ENCODE measurements at regions of chr12 and their contacts with region 1.

Region 1: GRCh38 chr12:53267999-53268647 is at the start of gene ESPL1:
- DNase-seq: peak; percentile 93
- ATAC-seq: peak; percentile 95
- H3K4me3 Mint-ChIP-seq: peak within 1 kb of the TSS; percentile 98
- H3K27ac Mint-ChIP-seq: peak within 1 kb of the TSS; percentile 98
- H3K4me1 Mint-ChIP-seq: peaks cover 47% of the 10 kb centered on the region
- H3K27me3 Mint-ChIP-seq: no peaks in the 10 kb centered on the region
- total RNA-seq, gene ESPL1: 126 TPM

Region 2: DNA sequence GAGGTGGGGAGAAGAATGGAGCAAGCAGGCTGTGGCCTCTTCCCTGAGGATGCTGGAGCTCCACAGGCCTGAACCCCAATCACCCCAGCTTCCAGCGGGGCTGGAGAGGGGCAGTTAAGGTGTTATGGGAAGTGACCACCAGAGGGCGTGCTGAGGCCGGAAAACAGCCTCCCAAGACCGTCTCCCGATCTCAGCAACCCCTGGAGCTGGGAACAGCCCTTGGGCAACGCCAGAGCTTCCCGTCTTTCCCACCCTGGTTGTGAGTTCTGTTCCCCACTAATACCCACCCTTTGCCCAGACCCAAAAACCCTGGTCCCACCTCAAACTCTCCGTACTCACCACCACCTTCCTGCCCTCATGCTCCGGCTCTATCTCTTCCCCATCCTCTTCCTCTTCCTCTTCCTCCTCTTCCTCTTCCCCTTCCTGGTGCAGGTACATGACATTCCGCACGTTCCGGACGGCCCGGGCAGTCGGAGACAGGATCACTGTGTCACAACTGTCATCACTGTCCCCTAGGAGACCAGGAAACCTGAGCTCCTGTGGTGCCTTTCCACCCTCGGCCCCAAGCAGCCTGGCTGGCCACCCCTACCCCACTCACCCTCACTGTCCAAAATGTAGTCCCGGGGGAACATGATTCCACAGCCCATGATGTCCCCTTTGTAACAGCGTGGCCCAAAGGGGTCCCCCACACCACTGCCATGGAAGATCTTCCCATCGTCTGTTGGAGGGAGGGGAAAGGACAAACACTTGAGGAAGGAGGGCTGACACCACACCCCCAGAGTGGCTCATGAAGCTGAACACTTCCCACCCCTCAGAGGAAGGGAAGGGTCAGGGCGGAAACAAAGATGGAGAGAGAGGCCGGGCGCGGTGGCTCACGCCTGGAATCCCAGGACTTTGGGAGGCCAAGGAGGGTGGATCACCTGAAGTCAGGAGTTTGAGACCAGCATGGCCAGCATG is 201.9 kb before region 1 on chr12:
- CTCF ChIA-PET with region 1: interaction called, 10 read pairs
- POLR2A ChIA-PET with region 1: no interaction called
- DNase-seq: peak; percentile 79
- ATAC-seq: peak; percentile 79
- H3K4me3 Mint-ChIP-seq: no peak overlapping the region
- H3K27ac Mint-ChIP-seq: peak overlapping the region; percentile 69
- H3K4me1 Mint-ChIP-seq: peaks cover 7% of the 10 kb centered on the region
- H3K27me3 Mint-ChIP-seq: no peaks in the 10 kb centered on the region

Region 3: DNA sequence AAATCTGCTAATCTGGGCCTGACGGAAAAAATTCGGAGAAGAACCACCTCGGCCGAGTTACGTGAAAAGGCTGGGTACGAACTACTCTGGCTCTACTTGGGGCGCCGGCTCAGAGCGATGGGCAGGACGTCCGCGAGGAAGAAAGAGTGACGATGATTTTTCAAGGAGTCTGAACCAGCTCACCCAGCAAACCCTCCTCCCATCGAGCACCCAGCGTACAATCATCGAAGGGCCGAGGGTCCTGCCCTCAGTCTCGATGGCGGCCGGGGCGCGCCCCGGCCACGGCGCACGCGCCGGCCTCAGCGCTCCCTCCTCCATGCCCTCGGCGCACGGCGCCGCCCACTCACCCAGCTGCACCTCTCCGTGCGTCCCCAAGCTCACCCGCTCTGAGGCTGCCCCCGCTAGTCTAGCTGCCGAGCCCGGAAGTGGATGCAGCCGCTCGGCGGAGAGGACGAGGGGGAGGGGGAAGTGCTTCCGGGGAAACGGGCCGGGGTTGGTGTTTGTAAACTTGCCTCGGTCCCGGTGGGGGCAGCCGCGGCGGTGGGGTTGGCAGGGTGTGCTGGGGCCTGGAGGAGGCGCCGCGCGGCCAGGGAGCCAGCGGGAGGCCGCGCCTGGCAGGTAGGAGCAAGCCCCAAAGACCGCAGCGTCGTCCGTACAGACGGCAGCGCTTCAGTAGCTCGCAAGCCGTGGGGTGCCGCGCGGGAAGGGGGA is 87.7 kb before region 1 on chr12 and contains the starts of genes CSAD and ZNF740:
- CTCF ChIA-PET with region 1: interaction called, 26 read pairs
- POLR2A ChIA-PET with region 1: interaction called, 18 read pairs
- DNase-seq: peak; percentile 98
- ATAC-seq: peak; percentile 97
- H3K4me3 Mint-ChIP-seq: peak within 1 kb of the TSS; percentile 86
- H3K27ac Mint-ChIP-seq: peak within 1 kb of the TSS; percentile 98
- H3K4me1 Mint-ChIP-seq: peaks cover 50% of the 10 kb centered on the region
- H3K27me3 Mint-ChIP-seq: no peaks in the 10 kb centered on the region
- total RNA-seq, gene CSAD: 15.7 to 17.0 TPM
- total RNA-seq, gene ZNF740: 28.2 to 31.4 TPM

Region 4: GRCh38 chr12:53205747-53206419 is 62.2 kb before region 1 on chr12:
- CTCF ChIA-PET with region 1: interaction called, 401 read pairs
- POLR2A ChIA-PET with region 1: interaction called, 22 read pairs
- DNase-seq: peak; percentile 90
- ATAC-seq: peak; percentile 71
- H3K4me3 Mint-ChIP-seq: peak overlapping the region; percentile 83
- H3K27ac Mint-ChIP-seq: peak overlapping the region; percentile 86
- H3K4me1 Mint-ChIP-seq: peaks cover 80% of the 10 kb centered on the region
- H3K27me3 Mint-ChIP-seq: no peaks in the 10 kb centered on the region

Region 5: GRCh38 chr12:53231826-53232645 is 36.1 kb before region 1 on chr12 and contains the start of gene RARG:
- CTCF ChIA-PET with region 1: interaction called, 11 read pairs
- POLR2A ChIA-PET with region 1: interaction called, 8 read pairs
- DNase-seq: peak; percentile 74
- ATAC-seq: peak; percentile 76
- H3K4me3 Mint-ChIP-seq: peak within 1 kb of the TSS; percentile 83
- H3K27ac Mint-ChIP-seq: peak within 1 kb of the TSS; percentile 76
- H3K4me1 Mint-ChIP-seq: peaks cover 66% of the 10 kb centered on the region
- H3K27me3 Mint-ChIP-seq: no peaks in the 10 kb centered on the region
- total RNA-seq, gene RARG: 44.1 to 45.9 TPM

Region 6: DNA sequence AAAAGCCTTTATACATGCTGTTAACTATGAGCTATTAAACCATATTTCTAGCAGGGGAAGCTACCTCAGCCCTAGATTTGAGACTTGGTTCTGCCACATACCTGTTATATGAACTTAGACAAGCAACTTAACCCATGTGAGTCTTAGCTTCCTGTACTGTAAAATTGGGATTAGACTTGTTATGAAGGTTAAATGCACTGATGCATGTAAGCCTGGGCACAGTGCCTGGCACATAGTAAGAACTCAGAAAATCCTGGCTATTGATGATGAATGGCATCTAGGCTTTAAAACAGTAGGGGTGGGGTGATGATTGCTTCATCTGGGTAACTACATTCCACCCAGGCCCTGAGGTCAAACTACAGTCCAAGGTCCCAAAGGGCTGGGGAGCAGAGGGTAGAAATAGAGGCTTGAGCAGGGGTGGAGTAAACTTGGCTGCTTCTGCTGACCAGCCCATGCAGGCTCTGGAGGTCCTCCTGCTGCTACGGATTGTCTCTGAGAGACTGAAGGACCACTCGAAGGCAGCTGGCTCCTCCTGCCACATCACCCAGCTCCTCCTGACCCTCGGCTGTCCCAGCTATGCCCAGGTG is 11.3 kb after region 1 on chr12:
- CTCF ChIA-PET with region 1: interaction called, 33 read pairs
- POLR2A ChIA-PET with region 1: interaction called, 24 read pairs
- DNase-seq: no peak
- ATAC-seq: no peak
- H3K4me3 Mint-ChIP-seq: no peak overlapping the region
- H3K27ac Mint-ChIP-seq: no peak overlapping the region
- H3K4me1 Mint-ChIP-seq: peaks cover 7% of the 10 kb centered on the region
- H3K27me3 Mint-ChIP-seq: no peaks in the 10 kb centered on the region

Region 7: GRCh38 chr12:53295070-53295890 is 27.2 kb after region 1 on chr12 and contains the start of gene PFDN5:
- CTCF ChIA-PET with region 1: interaction called, 12 read pairs
- POLR2A ChIA-PET with region 1: interaction called, 14 read pairs
- DNase-seq: peak; percentile 93
- ATAC-seq: peak; percentile 88
- H3K4me3 Mint-ChIP-seq: peak within 1 kb of the TSS; percentile 97
- H3K27ac Mint-ChIP-seq: peak within 1 kb of the TSS; percentile 92
- H3K4me1 Mint-ChIP-seq: peaks cover 40% of the 10 kb centered on the region
- H3K27me3 Mint-ChIP-seq: no peaks in the 10 kb centered on the region
- total RNA-seq, gene PFDN5: 292 to 307 TPM

Measured in activated CD8-positive, alpha-beta T cell treated with anti-CD3 and anti-CD28 coated beads, Interleukin-2, amount 10 ng/mL, durations not matched to agents 7 days and 5 days (primary cell).